Endothelial cell of umbilical vein (primary cell): ENCODE measurements at regions of chr1 and their contacts with region 1.

Region 1: GRCh38 chr1:205528887-205529825 is 24.7 kb downstream of the CDK18 start:
- DNase-seq: peak; percentile 58
- H3K4me3 ChIP-seq: peak overlapping the region in 1 of 3 experiments; percentile 9
- H3K27ac ChIP-seq: no peak overlapping the region
- H3K4me1 ChIP-seq: peaks cover 3% of the 10 kb centered on the region
- H3K27me3 ChIP-seq: no peaks in the 10 kb centered on the region
- CTCF ChIP-seq: peak; percentile 90 to 95
- POLR2A ChIP-seq: no peak

Region 2: DNA sequence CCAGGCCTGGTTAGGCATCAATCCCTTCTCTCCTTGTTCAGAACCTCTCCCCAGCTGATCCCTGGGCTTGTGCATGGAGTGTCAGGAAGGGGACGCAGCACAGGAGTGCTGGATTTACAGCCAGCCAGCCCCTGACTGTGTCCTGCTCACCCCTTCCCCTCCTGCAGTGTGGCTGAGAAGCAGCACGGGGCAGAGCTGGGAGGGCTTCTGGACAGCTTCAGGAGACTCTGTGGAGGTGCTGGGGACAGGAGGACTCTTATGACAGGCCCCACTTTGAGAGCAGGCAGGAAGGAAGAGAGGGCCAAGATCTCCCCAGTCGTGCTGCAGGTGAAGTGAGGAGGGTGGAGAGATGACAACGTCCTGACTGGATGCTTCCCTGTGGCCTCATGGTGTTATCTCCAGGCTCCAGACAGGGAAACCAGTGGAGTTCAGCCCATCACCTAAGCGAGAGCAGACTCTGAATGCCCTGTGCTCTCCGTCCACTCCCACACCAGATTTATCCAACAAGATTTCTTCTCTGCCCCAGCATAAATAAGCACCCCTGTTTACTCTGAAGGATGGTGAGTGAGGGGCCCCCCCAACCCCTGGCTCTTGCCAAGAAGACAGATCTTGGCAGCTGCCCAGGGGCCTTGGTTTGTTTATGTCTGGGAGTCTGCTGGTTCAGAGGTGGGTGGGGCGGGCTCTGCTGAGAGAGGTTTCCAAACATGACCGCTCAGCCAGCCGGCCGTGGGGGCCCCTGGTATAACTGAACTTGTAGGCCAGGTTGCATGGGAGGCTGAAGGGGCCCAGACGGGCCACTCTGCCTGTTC is 280.2 kb before region 1 on chr1:
- CTCF ChIA-PET with region 1: no interaction called
- POLR2A ChIA-PET with region 1: no interaction called
- dilution Hi-C with region 1: no loop called
- intact Hi-C with region 1: no loop called
- DNase-seq: peak; percentile 69
- H3K4me3 ChIP-seq: no peak overlapping the region
- H3K27ac ChIP-seq: no peak overlapping the region
- H3K4me1 ChIP-seq: no peaks in the 10 kb centered on the region
- H3K27me3 ChIP-seq: peaks cover 0 to 2% of the 10 kb centered on the region in 2 experiments
- CTCF ChIP-seq: no peak
- POLR2A ChIP-seq: no peak

Region 3: GRCh38 chr1:205543411-205544301 is 14.5 kb after region 1 on chr1:
- CTCF ChIA-PET with region 1: interaction called, 43 read pairs
- POLR2A ChIA-PET with region 1: interaction called, 4 read pairs
- dilution Hi-C with region 1: no loop called
- intact Hi-C with region 1: no loop called
- DNase-seq: peak; percentile 95
- H3K4me3 ChIP-seq: peak overlapping the region in 2 of 3 experiments; percentile 32 to 39
- H3K27ac ChIP-seq: peak overlapping the region; percentile 98
- H3K4me1 ChIP-seq: peaks cover 9% of the 10 kb centered on the region
- H3K27me3 ChIP-seq: peaks cover 2 to 5% of the 10 kb centered on the region in 2 experiments
- CTCF ChIP-seq: peak in 1 of 2 donors; percentile 5
- POLR2A ChIP-seq: no peak

Region 4: GRCh38 chr1:205568469-205569361 is 39.6 kb after region 1 on chr1:
- CTCF ChIA-PET with region 1: interaction called, 19 read pairs
- POLR2A ChIA-PET with region 1: no interaction called
- dilution Hi-C with region 1: no loop called
- intact Hi-C with region 1: no loop called
- DNase-seq: no peak
- H3K4me3 ChIP-seq: no peak overlapping the region
- H3K27ac ChIP-seq: no peak overlapping the region
- H3K4me1 ChIP-seq: no peaks in the 10 kb centered on the region
- H3K27me3 ChIP-seq: peaks cover 51 to 67% of the 10 kb centered on the region in 2 experiments
- CTCF ChIP-seq: peak in 1 of 2 donors; percentile 37
- POLR2A ChIP-seq: no peak

Region 5: DNA sequence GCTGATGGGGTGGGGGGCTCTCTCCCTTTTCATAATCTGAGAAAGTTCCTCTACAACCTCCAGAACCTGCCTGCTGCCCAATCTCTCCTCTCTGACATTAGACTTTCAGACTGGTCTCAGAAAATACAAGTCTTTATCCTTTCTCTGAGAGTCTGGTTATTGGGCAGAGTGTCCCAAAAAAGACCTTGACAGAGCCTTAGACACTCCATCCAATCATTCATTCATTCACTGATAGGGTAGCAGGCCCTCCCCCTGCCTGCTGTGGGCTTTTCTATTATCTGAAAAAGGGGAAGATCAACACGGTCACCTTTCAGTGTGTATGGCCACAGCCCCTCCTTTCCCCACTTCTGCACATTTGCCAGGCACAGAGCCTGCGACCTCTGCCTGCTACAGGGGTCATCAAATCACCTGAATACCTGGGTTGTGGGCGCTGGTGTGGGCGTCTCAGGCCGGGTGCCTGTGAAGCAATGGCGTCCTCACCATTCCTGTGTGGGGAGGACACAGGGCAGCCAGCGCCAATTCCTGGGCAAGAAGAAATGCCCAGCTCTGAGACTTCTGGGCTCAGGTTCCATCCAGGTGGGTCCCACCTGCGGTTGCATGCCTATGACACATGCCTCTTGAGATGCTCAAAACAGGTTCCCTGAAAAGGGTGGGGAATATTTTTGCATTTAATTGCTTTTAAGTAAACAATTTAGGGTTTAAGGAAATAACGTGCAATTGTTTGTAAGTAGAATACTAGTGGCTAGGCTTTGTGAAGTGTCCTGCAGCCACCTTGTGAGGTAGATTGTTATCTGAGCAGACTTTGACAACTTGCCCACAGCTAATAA is 49.8 kb after region 1 on chr1:
- CTCF ChIA-PET with region 1: interaction called, 10 read pairs
- POLR2A ChIA-PET with region 1: no interaction called
- dilution Hi-C with region 1: no loop called
- intact Hi-C with region 1: loop called (anchors 10 kb)
- DNase-seq: no peak
- H3K4me3 ChIP-seq: no peak overlapping the region
- H3K27ac ChIP-seq: no peak overlapping the region
- H3K4me1 ChIP-seq: peaks cover 19% of the 10 kb centered on the region
- H3K27me3 ChIP-seq: peaks cover 10 to 19% of the 10 kb centered on the region in 2 experiments
- CTCF ChIP-seq: no peak
- POLR2A ChIP-seq: no peak

Region 6: GRCh38 chr1:205584732-205585131 is 55.6 kb after region 1 on chr1:
- CTCF ChIA-PET with region 1: interaction called, 40 read pairs
- POLR2A ChIA-PET with region 1: no interaction called
- dilution Hi-C with region 1: no loop called
- intact Hi-C with region 1: loop called (anchors 10 kb)
- DNase-seq: no peak
- H3K4me3 ChIP-seq: no peak overlapping the region
- H3K27ac ChIP-seq: no peak overlapping the region
- H3K4me1 ChIP-seq: peaks cover 19% of the 10 kb centered on the region
- H3K27me3 ChIP-seq: no peaks in the 10 kb centered on the region
- CTCF ChIP-seq: peak; percentile 42 to 43
- POLR2A ChIP-seq: no peak

Region 7: DNA sequence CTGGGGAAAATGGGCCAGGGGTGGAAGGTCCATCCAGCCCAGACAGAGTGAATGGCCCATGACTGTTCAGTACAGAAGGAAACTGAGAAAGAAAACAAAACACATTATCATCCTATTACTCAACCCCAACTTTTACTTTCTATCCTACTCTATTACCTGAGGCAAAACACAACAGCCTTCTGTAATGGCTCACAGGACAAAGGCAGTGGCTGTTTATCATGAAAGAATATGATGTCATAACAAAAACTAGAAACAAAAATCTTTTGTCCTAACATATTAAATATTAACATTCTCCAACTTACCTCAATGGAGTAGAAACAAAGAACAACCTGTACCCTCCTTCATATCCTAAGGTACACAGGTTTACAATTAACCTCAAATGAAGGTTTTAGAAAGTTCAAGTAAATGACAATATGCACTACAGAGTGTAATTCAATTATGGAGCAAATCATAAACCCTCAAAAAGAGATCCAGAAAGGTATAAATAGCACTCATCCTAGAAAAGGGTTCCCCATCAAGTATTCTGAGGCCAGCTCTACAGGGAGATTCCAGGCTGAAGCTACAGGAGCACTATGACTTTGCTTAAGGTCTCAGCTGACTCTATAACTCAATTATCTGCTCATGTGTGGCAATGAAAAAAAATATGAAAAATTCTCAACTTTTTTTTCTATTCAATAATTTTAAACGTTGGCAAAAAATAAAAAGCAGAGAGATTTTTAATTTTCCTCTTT is 87.6 kb after region 1 on chr1:
- CTCF ChIA-PET with region 1: no interaction called
- POLR2A ChIA-PET with region 1: no interaction called
- dilution Hi-C with region 1: no loop called
- intact Hi-C with region 1: no loop called
- DNase-seq: no peak
- H3K4me3 ChIP-seq: no peak overlapping the region
- H3K27ac ChIP-seq: no peak overlapping the region
- H3K4me1 ChIP-seq: peaks cover 7% of the 10 kb centered on the region
- H3K27me3 ChIP-seq: no peaks in the 10 kb centered on the region
- CTCF ChIP-seq: no peak
- POLR2A ChIP-seq: no peak

Region 8: DNA sequence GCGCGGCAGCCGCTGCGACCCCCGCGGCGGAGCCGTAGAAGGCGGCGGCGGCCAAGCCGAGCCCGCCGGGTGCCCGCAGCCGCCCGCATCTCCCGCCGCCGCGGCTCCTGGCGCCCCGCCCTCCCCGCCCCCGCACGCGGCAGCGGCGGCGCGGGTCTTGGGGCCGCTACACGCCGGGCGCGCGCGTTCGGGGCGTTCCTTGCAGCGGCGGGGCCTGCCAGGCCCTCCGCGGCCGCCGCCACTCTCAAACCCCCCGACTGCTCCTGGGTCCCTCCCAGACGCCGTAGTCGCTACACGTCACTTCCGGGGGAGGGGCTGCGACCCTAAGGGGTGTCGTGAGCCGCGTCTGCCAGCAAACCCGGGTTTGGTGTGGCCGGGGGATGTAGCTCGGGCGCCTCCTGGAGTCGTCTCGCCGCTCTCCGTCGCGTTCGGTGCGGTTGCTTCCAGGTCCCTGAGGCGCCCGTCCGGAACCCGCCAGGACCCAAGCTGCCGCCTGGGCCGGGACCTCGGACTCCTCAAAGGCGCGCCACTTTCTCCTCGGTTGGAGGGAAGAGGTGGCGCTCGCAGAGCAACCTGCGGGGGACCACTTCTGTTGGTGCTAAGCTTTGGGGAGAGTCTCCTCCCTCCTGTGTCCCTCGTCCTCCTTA is 102.7 kb after region 1 on chr1 and contains the start of gene ELK4:
- CTCF ChIA-PET with region 1: interaction called, 28 read pairs
- POLR2A ChIA-PET with region 1: interaction called, 4 read pairs
- dilution Hi-C with region 1: no loop called
- intact Hi-C with region 1: loop called (anchors 1 kb)
- DNase-seq: peak; percentile 98
- H3K4me3 ChIP-seq: peak within 1 kb of the TSS; percentile 88 to 97 (median 92)
- H3K27ac ChIP-seq: peak within 1 kb of the TSS; percentile 82
- H3K4me1 ChIP-seq: peaks cover 29% of the 10 kb centered on the region
- H3K27me3 ChIP-seq: no peaks in the 10 kb centered on the region
- CTCF ChIP-seq: peak; percentile 72 to 90
- POLR2A ChIP-seq: peak; percentile 88
- total RNA-seq, gene ELK4: 78.7 and 107 TPM in 2 replicates